WTC11 (cell line): ENCODE measurements at regions of chr2 and their contacts with region 1.

Region 1: GRCh38 chr2:208407667-208408066 is 1.1 kb downstream of the PTH2R start:
- DNase-seq: peak; percentile 20
- ATAC-seq: peak; percentile 56
- H3K4me3 Mint-ChIP-seq: peak overlapping the region; percentile 67
- H3K27ac Mint-ChIP-seq: no peak overlapping the region
- H3K4me1 Mint-ChIP-seq: peaks cover 8% of the 10 kb centered on the region
- H3K27me3 Mint-ChIP-seq: peaks cover 43% of the 10 kb centered on the region
- CTCF ChIP-seq: peak; percentile 33; the same call in 1 of the 2 replicates

Region 2: GRCh38 chr2:208373460-208374089 is 34.1 kb before region 1 on chr2:
- CTCF ChIA-PET with region 1: interaction called, 13 read pairs
- POLR2A ChIA-PET with region 1: no interaction called
- DNase-seq: peak; percentile 57
- ATAC-seq: peak; percentile 74
- H3K4me3 Mint-ChIP-seq: no peak overlapping the region
- H3K27ac Mint-ChIP-seq: no peak overlapping the region
- H3K4me1 Mint-ChIP-seq: peaks cover 26% of the 10 kb centered on the region
- H3K27me3 Mint-ChIP-seq: peaks cover 3% of the 10 kb centered on the region; the same call in 1 of the 2 replicates
- CTCF ChIP-seq: peak; percentile 74; the same call in 1 of the 2 replicates

Region 3: DNA sequence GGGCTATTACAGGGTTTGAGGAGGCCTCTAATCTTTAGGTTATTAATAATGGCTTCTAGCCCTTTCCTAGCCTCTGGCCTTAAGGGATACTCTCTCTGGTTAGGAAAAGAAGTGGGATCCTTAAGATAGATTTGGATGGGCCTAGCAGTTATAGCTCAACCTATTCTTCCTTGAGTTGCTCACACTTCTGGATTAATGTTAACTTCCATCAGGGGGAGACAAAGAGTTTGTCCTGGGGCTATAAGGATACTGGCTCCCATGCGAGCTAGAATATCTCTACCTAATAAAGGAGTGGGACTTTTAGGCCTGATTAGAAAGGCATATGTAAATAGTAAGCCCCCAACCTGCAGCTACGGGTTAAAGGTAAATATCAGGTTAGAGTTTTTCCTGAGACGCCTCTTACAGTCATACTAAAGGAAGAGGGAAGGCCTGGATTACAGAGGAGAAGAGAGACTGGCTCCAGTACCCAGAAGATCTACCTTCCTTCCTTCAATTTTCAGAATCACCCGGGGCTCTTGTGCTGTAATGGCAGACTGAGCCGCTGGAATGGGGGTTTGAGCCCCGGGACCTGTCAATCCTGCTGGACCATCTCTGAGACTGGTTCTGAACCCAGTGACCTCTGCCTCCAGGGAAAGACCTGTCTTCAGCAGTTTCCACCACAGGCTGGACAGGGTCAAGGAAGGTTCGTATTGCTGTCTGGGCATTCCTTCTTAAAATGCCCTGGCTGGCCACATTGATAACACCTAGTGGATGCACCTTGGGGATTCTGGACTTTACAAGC is 15.2 kb before region 1 on chr2:
- CTCF ChIA-PET with region 1: interaction called, 15 read pairs
- POLR2A ChIA-PET with region 1: no interaction called
- DNase-seq: no peak
- ATAC-seq: no peak
- H3K4me3 Mint-ChIP-seq: no peak overlapping the region
- H3K27ac Mint-ChIP-seq: no peak overlapping the region
- H3K4me1 Mint-ChIP-seq: no peaks in the 10 kb centered on the region
- H3K27me3 Mint-ChIP-seq: no peaks in the 10 kb centered on the region; the same call in 1 of the 2 replicates
- CTCF ChIP-seq: no peak

Region 4: DNA sequence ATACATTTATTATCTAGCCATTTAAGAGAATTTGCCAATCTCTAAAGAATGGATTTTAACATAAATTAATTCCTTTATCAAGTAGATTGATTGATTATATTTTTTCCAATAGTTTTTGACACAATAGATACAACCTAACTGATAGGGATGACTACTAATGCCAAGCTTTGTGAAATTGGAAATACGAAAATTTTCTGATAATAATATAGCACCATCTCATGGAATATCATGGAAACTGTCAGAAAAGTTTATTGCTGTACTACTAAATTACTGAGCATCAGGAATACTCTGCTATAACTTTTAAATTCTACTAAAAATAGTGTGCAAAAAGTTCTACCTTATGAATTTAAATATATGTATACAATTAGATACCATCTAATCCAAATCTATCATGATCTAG is 914.4 kb after region 1 on chr2:
- CTCF ChIA-PET with region 1: interaction called, 12 read pairs
- POLR2A ChIA-PET with region 1: no interaction called
- DNase-seq: no peak
- ATAC-seq: no peak
- H3K4me3 Mint-ChIP-seq: no peak overlapping the region
- H3K27ac Mint-ChIP-seq: no peak overlapping the region
- H3K4me1 Mint-ChIP-seq: peaks cover 20% of the 10 kb centered on the region
- H3K27me3 Mint-ChIP-seq: peaks cover 21% of the 10 kb centered on the region
- CTCF ChIP-seq: no peak

Region 5: DNA sequence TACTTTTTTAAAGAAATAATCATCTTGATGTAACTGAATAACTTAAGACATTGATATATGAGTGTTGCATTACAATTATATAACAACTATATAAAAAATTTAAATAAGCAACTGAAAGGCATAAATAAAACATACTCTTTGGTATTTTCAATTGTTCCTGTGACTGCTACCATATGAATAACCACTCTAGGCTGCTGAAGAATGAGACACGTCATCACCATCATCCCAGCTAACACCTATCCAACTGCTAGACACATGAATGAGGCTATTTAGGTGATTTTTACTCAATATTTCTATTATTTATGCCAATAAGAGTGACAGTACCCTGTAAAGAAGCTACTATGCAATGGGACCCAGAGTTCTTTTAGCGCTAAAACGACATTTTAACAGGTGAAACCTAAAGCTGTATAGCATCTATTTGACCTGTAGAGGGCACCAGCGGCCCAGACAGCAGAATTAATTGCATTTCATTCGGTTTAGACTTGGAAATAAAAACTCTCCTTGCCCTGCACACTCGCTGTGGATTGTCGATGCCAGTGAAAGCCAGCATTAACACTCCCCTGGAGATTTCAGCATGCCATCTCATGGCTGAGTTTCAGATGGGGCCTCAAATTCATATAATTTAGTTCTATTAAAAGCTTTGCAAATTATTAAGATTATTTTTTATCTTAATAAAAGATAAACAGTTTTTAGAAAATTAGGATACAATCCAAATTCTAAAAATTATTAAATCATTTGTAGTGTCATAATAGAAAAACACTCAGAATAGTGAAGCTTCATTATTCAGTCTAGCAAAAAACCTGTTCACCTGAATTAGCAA is 926.7 kb after region 1 on chr2:
- CTCF ChIA-PET with region 1: interaction called, 41 read pairs
- POLR2A ChIA-PET with region 1: no interaction called
- DNase-seq: peak; percentile 57
- ATAC-seq: peak; percentile 76
- H3K4me3 Mint-ChIP-seq: no peak overlapping the region
- H3K27ac Mint-ChIP-seq: no peak overlapping the region
- H3K4me1 Mint-ChIP-seq: peaks cover 13% of the 10 kb centered on the region
- H3K27me3 Mint-ChIP-seq: peaks cover 9% of the 10 kb centered on the region
- CTCF ChIP-seq: peak; percentile 73